Calu3 (cell line): ENCODE measurements at regions of chr3 and their contacts with region 1.

Region 1: GRCh38 chr3:159252772-159253384 is 451.0 kb downstream of the MFSD1 start:
- DNase-seq: peak; percentile 58
- H3K4me3 Mint-ChIP-seq: no peak overlapping the region
- H3K27ac Mint-ChIP-seq: no peak overlapping the region
- H3K4me1 Mint-ChIP-seq: peaks cover 24% of the 10 kb centered on the region
- H3K27me3 Mint-ChIP-seq: peaks cover 14% of the 10 kb centered on the region
- CTCF ChIP-seq: peak; percentile 95

Region 2: DNA sequence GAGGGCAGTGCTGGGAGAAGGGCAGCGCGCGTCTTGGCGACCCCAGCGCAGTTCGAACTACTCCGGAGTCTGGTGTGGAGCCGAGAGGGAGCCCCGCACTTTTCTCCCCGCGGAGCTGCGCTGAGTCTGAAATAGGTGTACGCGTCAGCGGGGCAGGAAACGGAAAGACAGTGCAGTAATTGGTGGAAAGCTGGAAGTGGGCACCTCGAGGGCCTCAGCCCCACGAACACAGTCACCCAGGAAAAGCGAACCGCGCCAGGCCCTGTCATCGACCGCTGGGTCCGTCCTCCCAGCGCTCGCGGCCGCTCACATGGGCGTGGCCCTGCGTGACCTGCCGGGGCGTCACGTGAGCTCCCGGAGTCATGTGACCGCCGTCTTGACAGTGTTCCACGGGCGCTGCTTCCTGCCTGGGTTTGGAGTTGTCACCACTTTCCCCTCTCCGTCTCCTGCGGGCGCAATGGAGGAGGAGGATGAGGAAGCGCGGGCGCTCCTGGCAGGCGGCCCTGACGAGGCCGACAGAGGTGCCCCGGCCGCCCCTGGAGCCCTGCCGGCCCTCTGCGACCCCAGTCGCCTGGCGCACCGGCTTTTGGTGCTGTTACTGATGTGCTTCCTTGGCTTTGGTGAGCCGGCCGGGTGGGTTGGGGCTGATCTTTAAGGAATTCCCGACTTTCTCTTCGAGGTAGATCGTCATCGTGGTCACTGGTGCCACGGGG is 451.0 kb before region 1 on chr3 and contains the start of gene MFSD1:
- CTCF ChIA-PET with region 1: no interaction called
- intact Hi-C with region 1: loop called (anchors 2 kb)
- DNase-seq: peak; percentile 97
- H3K4me3 Mint-ChIP-seq: peak within 1 kb of the TSS; percentile 78
- H3K27ac Mint-ChIP-seq: peak within 1 kb of the TSS; percentile 82
- H3K4me1 Mint-ChIP-seq: peaks cover 28% of the 10 kb centered on the region
- H3K27me3 Mint-ChIP-seq: no peaks in the 10 kb centered on the region
- CTCF ChIP-seq: no peak
- total RNA-seq, gene MFSD1: 95.8 and 100 TPM in 2 replicates

Region 3: DNA sequence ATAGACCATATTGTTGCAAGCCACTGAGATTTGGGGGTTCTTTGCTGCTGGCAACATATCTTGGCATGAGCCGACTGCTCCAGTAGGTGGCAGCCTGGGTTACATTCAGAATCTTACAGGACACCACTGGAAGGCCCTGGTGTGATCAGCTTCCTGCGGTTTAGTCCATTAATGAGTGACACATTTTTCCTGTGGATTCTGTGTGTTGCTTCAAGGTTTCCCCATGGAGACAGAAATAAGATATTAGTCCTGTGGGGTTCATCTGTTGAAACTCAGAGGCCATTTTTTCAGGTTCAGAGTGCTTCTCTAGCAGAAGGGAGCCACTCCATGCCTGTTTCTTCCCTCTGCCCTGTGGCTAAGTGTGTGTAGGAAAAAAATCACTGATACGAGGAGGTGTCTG is 334.9 kb before region 1 on chr3:
- CTCF ChIA-PET with region 1: interaction called, 22 read pairs
- intact Hi-C with region 1: loop called (anchors 1 kb)
- DNase-seq: peak; percentile 89
- H3K4me3 Mint-ChIP-seq: no peak overlapping the region
- H3K27ac Mint-ChIP-seq: peak overlapping the region; percentile 16
- H3K4me1 Mint-ChIP-seq: peaks cover 9% of the 10 kb centered on the region
- H3K27me3 Mint-ChIP-seq: peaks cover 10% of the 10 kb centered on the region
- CTCF ChIP-seq: peak; percentile 94

Region 4: DNA sequence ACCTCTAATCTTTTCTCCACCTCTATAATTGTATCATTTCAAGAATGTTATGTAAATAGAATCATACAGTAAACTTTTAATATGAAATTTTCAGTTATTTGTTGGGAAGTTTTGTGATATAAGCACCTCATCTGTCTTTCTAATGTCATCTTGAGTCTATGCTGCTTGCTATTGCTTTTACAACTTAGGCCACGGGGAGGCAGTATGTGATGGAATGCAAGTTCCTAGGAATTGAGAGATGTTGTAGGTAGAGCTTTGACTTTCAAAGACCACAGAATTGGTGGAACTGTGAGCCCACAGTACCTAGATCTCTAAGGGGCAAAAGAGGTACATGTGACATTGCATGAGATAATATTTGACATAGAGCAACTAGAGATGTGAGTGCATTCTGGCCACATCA is 122.8 kb before region 1 on chr3:
- CTCF ChIA-PET with region 1: interaction called, 10 read pairs
- intact Hi-C with region 1: loop called (anchors 1 kb)
- DNase-seq: peak; percentile 63
- H3K4me3 Mint-ChIP-seq: no peak overlapping the region
- H3K27ac Mint-ChIP-seq: peak overlapping the region; percentile 25
- H3K4me1 Mint-ChIP-seq: peaks cover 47% of the 10 kb centered on the region
- H3K27me3 Mint-ChIP-seq: no peaks in the 10 kb centered on the region
- CTCF ChIP-seq: peak; percentile 34

Region 5: DNA sequence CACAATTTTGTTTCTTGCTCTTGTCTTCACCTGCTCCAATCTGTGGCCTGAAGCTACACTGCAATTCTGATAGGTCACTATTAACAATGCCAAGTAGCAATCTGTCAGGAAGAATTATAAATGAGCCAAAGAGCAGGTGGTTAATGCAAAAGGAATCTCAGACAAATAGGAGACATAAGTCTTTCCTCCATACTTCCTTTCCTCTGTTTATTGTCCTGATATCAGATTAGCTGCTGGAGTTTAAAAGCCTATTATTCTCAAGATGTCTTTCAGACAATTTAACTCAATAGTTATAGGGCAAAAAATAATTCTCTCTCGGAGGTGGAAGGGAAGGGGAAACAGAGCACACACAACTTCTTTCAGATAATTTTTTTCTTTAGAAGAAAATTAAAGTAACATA is 40.6 kb after region 1 on chr3:
- CTCF ChIA-PET with region 1: no interaction called
- intact Hi-C with region 1: no loop called
- DNase-seq: no peak
- H3K4me3 Mint-ChIP-seq: no peak overlapping the region
- H3K27ac Mint-ChIP-seq: no peak overlapping the region
- H3K4me1 Mint-ChIP-seq: no peaks in the 10 kb centered on the region
- H3K27me3 Mint-ChIP-seq: no peaks in the 10 kb centered on the region
- CTCF ChIP-seq: no peak

Region 6: DNA sequence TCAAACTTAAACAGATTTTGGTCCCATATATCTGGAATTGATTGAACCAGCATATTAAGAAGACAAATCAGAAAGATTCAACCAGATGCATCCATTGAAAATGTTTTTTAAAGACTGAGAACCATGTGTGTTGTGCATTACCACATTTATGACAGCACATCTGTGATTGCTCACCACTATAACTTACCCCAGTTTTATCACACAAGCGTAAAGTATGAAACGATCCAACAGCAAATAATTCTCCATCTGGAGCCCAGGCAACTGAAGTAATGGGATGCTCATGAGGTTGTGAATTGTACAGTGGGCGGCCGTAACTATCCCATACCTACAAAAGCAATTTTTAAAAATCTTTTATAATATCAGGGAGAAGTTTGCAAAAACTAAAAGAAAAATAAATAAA is 1102.9 kb after region 1 on chr3:
- CTCF ChIA-PET with region 1: no interaction called
- intact Hi-C with region 1: no loop called
- DNase-seq: no peak
- H3K4me3 Mint-ChIP-seq: no peak overlapping the region
- H3K27ac Mint-ChIP-seq: no peak overlapping the region
- H3K4me1 Mint-ChIP-seq: no peaks in the 10 kb centered on the region
- H3K27me3 Mint-ChIP-seq: no peaks in the 10 kb centered on the region
- CTCF ChIP-seq: no peak